Esophagus squamous epithelium (tissue), 5 donors: ENCODE measurements at regions of chr6 and their contacts with region 1.

Region 1: GRCh38 chr6:122730775-122731386 is 48.6 kb upstream of the FABP7 start:
- DNase-seq: no peak
- H3K4me3 ChIP-seq: no peak overlapping the region
- H3K27ac ChIP-seq: no peak overlapping the region
- H3K4me1 ChIP-seq: peaks cover 0 to 13% (median 5%) of the 10 kb centered on the region in 3 donors
- H3K27me3 ChIP-seq: no peaks in the 10 kb centered on the region
- CTCF ChIP-seq: peak; percentile 50 to 79 (median 66)
- POLR2A ChIP-seq: no peak

Region 2: GRCh38 chr6:122381497-122382265 is 349.2 kb before region 1 on chr6:
- intact Hi-C with region 1: no loop called
- DNase-seq: no peak
- H3K4me3 ChIP-seq: no peak overlapping the region
- H3K27ac ChIP-seq: no peak overlapping the region
- H3K4me1 ChIP-seq: no peaks in the 10 kb centered on the region
- H3K27me3 ChIP-seq: peaks cover 0 to 6% (median 0%) of the 10 kb centered on the region in 4 donors
- CTCF ChIP-seq: peak; percentile 62 to 78 (median 69)
- POLR2A ChIP-seq: no peak

Region 3: DNA sequence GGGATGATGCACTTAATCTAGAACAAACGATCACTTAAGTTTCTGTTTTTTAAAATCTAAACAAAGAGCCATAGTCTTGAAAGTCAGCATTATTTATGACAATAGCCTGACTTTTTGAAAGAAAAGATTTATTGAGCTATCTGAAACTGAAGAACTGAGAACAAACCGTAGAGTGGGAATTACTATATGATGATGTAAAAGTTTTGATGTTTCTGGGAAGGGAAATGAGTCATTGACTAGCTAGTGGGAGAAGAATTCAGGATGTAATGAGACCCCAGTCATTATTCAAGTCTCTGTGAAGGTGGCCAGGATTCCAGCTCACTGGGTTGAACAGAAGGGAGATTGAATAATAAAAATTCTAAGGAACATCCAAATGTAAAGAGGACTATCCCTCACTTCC is 34.8 kb before region 1 on chr6:
- intact Hi-C with region 1: no loop called
- DNase-seq: no peak
- H3K4me3 ChIP-seq: no peak overlapping the region
- H3K27ac ChIP-seq: no peak overlapping the region
- H3K4me1 ChIP-seq: no peaks in the 10 kb centered on the region
- H3K27me3 ChIP-seq: no peaks in the 10 kb centered on the region
- CTCF ChIP-seq: no peak
- POLR2A ChIP-seq: no peak

Region 4: GRCh38 chr6:122839477-122839876 is 108.6 kb after region 1 on chr6:
- intact Hi-C with region 1: loop called (anchors 5 kb)
- DNase-seq: no peak
- H3K4me3 ChIP-seq: no peak overlapping the region
- H3K27ac ChIP-seq: no peak overlapping the region
- H3K4me1 ChIP-seq: no peaks in the 10 kb centered on the region
- H3K27me3 ChIP-seq: no peaks in the 10 kb centered on the region
- CTCF ChIP-seq: peak; percentile 38 to 80 (median 70)
- POLR2A ChIP-seq: no peak

Region 5: DNA sequence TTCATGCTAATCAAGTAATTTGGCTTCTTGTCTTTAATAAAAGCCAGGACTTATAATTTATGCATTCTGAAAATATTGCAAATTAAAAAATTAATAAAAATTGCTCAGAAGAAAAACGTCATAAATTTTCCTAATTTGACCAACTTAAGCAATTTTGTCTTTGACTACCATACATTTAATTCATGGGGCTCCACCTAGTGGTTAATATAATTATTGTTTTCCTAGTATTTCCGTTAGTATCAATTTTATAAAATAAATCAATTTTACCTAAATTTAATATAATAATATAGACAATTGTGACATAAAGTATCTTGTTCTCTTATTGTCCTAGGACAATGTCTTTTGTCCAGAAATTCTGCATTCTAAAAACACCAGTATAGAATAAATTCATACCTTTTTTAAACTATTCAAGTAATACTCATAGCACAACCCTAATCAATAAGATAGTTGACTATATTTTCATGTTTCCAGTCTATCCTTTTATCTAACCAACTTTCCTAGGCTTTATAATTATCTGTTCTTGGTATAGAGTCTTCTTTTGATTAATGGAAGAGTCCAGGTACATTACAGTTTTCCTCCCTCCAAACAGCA is 585.9 kb after region 1 on chr6:
- intact Hi-C with region 1: loop called (anchors 10 kb)
- DNase-seq: no peak
- H3K4me3 ChIP-seq: no peak overlapping the region
- H3K27ac ChIP-seq: no peak overlapping the region
- H3K4me1 ChIP-seq: no peaks in the 10 kb centered on the region
- H3K27me3 ChIP-seq: no peaks in the 10 kb centered on the region
- CTCF ChIP-seq: peak in 3 of 6 experiments; percentile 46 to 56 (median 48)
- POLR2A ChIP-seq: no peak